HCT116 (cell line): ENCODE measurements at regions of chr17 and their contacts with region 1.

Region 1: GRCh38 chr17:57130761-57131461 is 45.9 kb downstream of the AKAP1 start:
- DNase-seq: peak; percentile 70
- ATAC-seq: peak; percentile 97
- H3K4me3 ChIP-seq: no peak overlapping the region; a peak in 1 of 4 replicates
- H3K27ac ChIP-seq: no peak overlapping the region
- H3K4me1 ChIP-seq: peaks cover 0 to 3% of the 10 kb centered on the region in 2 experiments; a peak in 1 of 4 replicates
- H3K27me3 ChIP-seq: no peaks in the 10 kb centered on the region
- CTCF ChIP-seq: peak; percentile 65 to 86 (median 82)
- POLR2A ChIP-seq: no peak
- RAD21 ChIP-seq: peak; percentile 87

Region 2: DNA sequence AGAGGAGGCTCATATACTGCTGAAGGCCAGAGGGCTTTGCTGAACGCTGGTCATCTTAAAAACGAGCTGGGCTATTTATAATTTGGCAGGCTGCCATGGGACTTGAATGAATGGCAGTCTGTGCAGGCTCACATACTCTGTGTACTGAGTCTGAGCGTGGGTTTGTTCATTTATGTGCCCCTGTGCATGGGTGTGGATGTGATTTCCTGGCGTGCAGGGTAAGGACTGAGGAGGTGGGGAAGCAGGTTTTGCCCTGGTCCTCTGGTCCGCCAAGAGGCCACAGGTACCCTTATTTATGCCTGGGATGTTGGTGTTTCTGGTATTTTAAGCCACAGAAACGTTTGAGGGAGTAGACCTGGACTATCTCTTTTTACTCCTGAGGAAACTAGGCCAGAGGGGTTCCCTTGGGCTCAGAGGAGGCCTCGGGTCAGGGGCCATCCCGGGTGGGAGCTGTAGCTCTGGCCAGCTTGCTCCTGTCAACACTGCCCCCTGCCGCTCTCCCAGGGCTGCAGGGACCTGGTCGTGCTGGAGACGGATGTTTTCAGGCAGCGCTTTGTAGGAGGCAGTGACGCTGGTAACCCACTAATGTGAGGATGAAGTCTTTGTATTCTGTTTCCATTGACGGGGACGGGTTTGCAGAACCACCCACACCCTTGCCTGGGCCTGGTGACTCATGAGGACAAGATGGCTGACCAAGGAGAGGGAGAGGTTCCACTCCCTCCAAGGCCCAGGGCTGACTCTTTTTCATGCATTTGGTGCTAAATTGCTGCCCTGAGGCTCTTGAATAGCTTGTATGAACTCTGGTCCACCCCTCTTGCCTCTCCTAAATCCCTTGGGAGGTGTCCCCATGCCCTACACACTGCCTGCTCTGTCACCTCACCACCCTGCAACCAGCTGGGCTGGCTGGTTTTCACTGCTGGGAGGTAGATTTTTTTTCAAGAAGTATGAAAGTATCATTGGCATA is 309.9 kb after region 1 on chr17:
- CTCF ChIA-PET with region 1: interaction called, 4 read pairs
- POLR2A ChIA-PET with region 1: no interaction called
- RAD21 ChIA-PET with region 1: no interaction called
- intact Hi-C with region 1: loop called (anchors 2 kb)
- DNase-seq: peak; percentile 76
- ATAC-seq: peak; percentile 86
- H3K4me3 ChIP-seq: peak overlapping the region in 1 of 2 experiments; percentile 23; a peak in 2 of 4 replicates
- H3K27ac ChIP-seq: peak overlapping the region; percentile 86
- H3K4me1 ChIP-seq: peaks cover 67 to 79% of the 10 kb centered on the region in 2 experiments
- H3K27me3 ChIP-seq: no peaks in the 10 kb centered on the region
- CTCF ChIP-seq: peak; percentile 94 to 95 (median 95)
- POLR2A ChIP-seq: no peak
- RAD21 ChIP-seq: peak; percentile 80

Region 3: GRCh38 chr17:57671667-57672632 is 541.0 kb after region 1 on chr17:
- CTCF ChIA-PET with region 1: interaction called, 16 read pairs
- POLR2A ChIA-PET with region 1: no interaction called
- RAD21 ChIA-PET with region 1: no interaction called
- intact Hi-C with region 1: loop called (anchors 1 kb)
- DNase-seq: peak; percentile 47
- ATAC-seq: peak; percentile 100
- H3K4me3 ChIP-seq: no peak overlapping the region
- H3K27ac ChIP-seq: no peak overlapping the region
- H3K4me1 ChIP-seq: peaks cover 0 to 3% of the 10 kb centered on the region in 2 experiments; a peak in 1 of 4 replicates
- H3K27me3 ChIP-seq: no peaks in the 10 kb centered on the region
- CTCF ChIP-seq: peak; percentile 93 to 100 (median 100)
- POLR2A ChIP-seq: no peak
- RAD21 ChIP-seq: peak; percentile 95

Region 4: DNA sequence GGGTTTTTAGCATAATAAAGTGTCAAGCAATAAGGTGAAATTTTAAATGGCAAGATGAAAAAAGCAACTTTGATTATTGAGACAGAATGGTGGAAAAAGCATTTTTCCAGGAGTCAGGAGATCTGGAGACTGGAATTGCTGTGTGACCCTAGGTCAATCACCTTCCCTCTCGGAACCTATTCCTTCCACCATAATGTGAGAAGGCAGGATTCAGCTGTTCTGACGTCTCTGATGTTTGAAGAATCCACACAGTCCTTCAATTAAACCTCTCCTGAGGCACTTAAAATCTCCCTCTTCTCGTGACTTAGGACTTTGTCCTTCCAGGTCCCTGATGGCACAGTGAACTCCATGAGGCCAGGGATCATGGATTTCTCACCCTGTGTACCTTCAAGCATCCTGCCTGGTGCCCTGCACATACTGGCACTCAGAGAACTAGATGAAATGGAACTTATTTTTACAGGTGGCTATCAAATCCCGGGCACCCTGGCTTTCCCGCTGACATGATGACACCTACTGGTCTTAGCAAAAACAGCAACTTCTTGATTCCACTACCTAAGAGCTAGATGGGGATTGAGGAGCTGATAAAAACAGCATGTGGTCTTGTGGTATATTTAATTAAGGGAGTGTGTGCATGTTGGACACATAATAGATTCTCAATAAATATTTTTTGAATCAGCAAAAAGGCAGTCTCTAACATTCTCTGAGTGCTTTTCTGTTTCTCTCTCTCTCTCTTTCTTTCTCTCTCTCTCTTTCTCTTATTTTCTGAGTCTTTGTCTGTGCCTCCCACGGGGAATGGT is 616.5 kb after region 1 on chr17:
- CTCF ChIA-PET with region 1: interaction called, 14 read pairs
- POLR2A ChIA-PET with region 1: interaction called, 3 read pairs
- RAD21 ChIA-PET with region 1: interaction called in 1 of 2 experiments, 7 read pairs
- intact Hi-C with region 1: no loop called
- DNase-seq: peak; percentile 76
- ATAC-seq: peak; percentile 93
- H3K4me3 ChIP-seq: no peak overlapping the region
- H3K27ac ChIP-seq: no peak overlapping the region
- H3K4me1 ChIP-seq: no peaks in the 10 kb centered on the region
- H3K27me3 ChIP-seq: peaks cover 10% of the 10 kb centered on the region; the same call in 1 of the 2 replicates
- CTCF ChIP-seq: peak; percentile 92 to 98 (median 93)
- POLR2A ChIP-seq: no peak
- RAD21 ChIP-seq: peak; percentile 96

Region 5: GRCh38 chr17:57833179-57833939 is 702.4 kb after region 1 on chr17:
- CTCF ChIA-PET with region 1: interaction called, 24 read pairs
- POLR2A ChIA-PET with region 1: no interaction called
- RAD21 ChIA-PET with region 1: no interaction called
- intact Hi-C with region 1: loop called (anchors 1 kb)
- DNase-seq: peak; percentile 69
- ATAC-seq: peak; percentile 77
- H3K4me3 ChIP-seq: no peak overlapping the region
- H3K27ac ChIP-seq: no peak overlapping the region
- H3K4me1 ChIP-seq: peaks cover 0 to 15% of the 10 kb centered on the region in 2 experiments; a peak in 2 of 4 replicates
- H3K27me3 ChIP-seq: no peaks in the 10 kb centered on the region
- CTCF ChIP-seq: peak; percentile 86 to 100 (median 97)
- POLR2A ChIP-seq: no peak
- RAD21 ChIP-seq: peak; percentile 88